Naive thymus-derived CD4-positive, alpha-beta T cell (primary cell): ENCODE measurements at regions of chr5 and their contacts with region 1.

Region 1: DNA sequence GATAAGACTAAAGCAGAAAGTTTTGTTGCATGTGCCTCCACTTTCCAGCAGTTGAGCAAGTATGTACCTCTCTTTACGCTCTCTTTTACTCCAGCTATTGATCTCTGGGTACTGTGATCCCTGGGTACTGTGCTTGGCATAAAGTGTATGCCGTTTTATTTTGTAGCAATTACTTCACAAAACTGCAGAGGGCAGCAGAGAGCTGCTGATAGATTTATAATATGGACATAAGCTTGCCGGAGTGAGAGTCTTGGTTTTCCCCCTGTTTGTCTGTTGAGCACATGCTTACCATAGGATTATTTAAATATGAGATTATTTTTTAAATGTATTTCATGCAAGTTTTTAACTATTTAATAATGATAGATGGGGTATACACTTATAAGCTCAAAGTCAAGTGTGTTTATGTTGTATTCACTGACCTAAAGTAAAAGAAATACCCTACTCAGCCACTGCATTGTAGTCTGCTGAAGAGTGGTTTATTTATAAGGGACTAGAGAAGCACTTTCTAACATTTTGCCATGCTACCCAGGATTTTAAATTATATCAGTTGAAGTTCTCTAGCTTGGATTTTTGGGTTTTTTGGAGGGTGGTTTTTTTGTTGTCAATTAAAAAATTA is 13.0 kb downstream of the TTC1 start:
- DNase-seq: peak in 8 of 9 donors; percentile 12 to 76 (median 64)
- ATAC-seq: peak; percentile 97
- H3K4me3 ChIP-seq: no peak overlapping the region
- H3K4me3 Mint-ChIP-seq: peak overlapping the region in 1 of 10 donors; percentile 6
- H3K27ac ChIP-seq: no peak overlapping the region
- H3K27ac Mint-ChIP-seq: peak overlapping the region in 7 of 9 donors; percentile 15 to 93 (median 68)
- H3K4me1 ChIP-seq: peaks cover 3 to 15% of the 10 kb centered on the region in 2 donors
- H3K4me1 Mint-ChIP-seq: peaks cover 17 to 53% (median 37%) of the 10 kb centered on the region in 7 donors
- H3K27me3 ChIP-seq: no peaks in the 10 kb centered on the region
- H3K27me3 Mint-ChIP-seq: no peaks in the 10 kb centered on the region

Region 2: DNA sequence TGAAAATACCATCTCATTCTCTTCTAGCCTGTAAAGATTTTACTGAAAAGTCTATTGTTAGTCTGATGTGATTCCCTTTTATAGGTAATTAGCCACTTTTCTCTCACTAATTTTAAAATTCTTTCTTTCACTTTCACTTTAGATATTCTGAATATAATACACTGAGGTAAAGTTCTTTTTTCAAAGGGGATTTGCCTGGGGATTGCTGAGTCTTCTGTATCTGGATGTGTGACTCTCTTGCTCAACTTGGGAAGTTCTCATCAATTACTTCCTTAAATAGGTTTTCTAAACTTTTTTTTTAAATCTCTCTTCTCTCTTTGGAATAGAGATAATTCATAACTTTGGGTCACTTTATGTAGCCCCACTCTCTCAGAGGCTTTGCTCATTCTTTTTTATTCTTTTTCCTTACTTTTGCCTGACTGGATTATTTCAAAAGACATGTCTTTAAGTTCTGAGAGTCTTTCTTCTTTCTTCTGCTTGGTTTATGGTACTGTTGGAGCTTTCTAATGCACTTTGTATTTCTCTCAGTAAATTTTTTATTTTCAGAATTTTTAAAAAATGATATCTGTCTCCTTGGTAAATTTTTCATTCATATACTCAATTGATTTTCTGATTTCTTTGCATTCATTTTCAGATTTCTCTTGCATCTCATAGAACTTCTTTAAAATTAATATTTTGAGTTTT is 635.8 kb before region 1 on chr5:
- CTCF ChIA-PET with region 1: no interaction called
- POLR2A ChIA-PET with region 1: no interaction called
- intact Hi-C with region 1: no loop called
- DNase-seq: no peak
- ATAC-seq: no peak
- H3K4me3 ChIP-seq: no peak overlapping the region
- H3K4me3 Mint-ChIP-seq: no peak overlapping the region
- H3K27ac ChIP-seq: no peak overlapping the region
- H3K27ac Mint-ChIP-seq: no peak overlapping the region
- H3K4me1 ChIP-seq: no peaks in the 10 kb centered on the region
- H3K4me1 Mint-ChIP-seq: peaks cover 0 to 2% (median 0%) of the 10 kb centered on the region in 7 donors
- H3K27me3 ChIP-seq: no peaks in the 10 kb centered on the region
- H3K27me3 Mint-ChIP-seq: peaks cover 0 to 40% (median 4%) of the 10 kb centered on the region in 5 donors

Region 3: DNA sequence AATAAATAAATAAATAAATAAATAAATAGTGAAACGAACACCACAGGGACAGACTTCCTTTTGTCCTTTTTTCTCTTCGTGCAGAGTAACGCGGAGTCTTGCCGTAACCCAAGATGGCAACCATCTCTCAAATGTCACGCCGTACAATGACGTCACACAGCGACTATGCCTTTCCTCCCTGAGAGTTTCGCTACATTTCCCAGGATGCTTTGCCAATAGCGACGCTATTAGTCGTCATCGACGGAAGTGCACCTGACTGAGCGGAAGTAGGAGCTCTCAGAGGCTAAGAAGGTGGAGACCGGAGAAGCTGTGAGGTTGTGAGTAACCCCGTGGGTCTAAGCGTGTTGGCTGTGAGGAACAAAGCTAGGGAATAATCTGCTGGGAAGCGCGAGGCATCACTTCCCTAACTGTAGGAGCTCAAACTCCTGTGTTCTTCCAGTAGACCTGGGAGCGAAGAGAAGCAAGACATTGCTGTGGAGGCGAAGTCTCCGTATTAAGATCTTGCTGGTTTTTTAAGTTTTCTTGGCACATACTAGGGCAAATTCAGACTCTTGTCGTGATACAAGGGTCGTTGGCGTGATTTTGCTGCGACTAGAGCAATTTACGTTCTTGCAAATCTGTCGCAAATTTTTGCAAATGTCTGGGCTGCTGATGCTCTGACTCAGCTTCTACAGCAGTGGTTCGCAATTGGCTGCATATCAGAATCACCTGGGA is 12.9 kb before region 1 on chr5 and contains the start of gene TTC1:
- CTCF ChIA-PET with region 1: interaction called, 12 read pairs
- POLR2A ChIA-PET with region 1: interaction called, 4 read pairs
- intact Hi-C with region 1: loop called in 1 of 2 experiments (anchors 1 kb)
- DNase-seq: peak; percentile 71 to 96 (median 91)
- ATAC-seq: peak; percentile 99
- H3K4me3 ChIP-seq: peak within 1 kb of the TSS; percentile 84
- H3K4me3 Mint-ChIP-seq: peak within 1 kb of the TSS; percentile 93 to 99 (median 96)
- H3K27ac ChIP-seq: peak within 1 kb of the TSS; percentile 85
- H3K27ac Mint-ChIP-seq: peak within 1 kb of the TSS; percentile 91 to 99 (median 97)
- H3K4me1 ChIP-seq: peaks cover 9 to 13% of the 10 kb centered on the region in 2 donors
- H3K4me1 Mint-ChIP-seq: peaks cover 19 to 40% (median 31%) of the 10 kb centered on the region in 7 donors
- H3K27me3 ChIP-seq: no peaks in the 10 kb centered on the region
- H3K27me3 Mint-ChIP-seq: peaks cover 0 to 3% (median 0%) of the 10 kb centered on the region in 5 donors
- total RNA-seq, gene TTC1: 24.3 to 56.5 (median 41.7) TPM

Region 4: GRCh38 chr5:160158087-160158486 is 136.1 kb after region 1 on chr5:
- CTCF ChIA-PET with region 1: interaction called, 4 read pairs
- POLR2A ChIA-PET with region 1: no interaction called
- intact Hi-C with region 1: loop called in 1 of 2 experiments (anchors 1 kb)
- DNase-seq: no peak
- ATAC-seq: no peak
- H3K4me3 ChIP-seq: no peak overlapping the region
- H3K4me3 Mint-ChIP-seq: no peak overlapping the region
- H3K27ac ChIP-seq: no peak overlapping the region
- H3K27ac Mint-ChIP-seq: no peak overlapping the region
- H3K4me1 ChIP-seq: no peaks in the 10 kb centered on the region
- H3K4me1 Mint-ChIP-seq: no peaks in the 10 kb centered on the region
- H3K27me3 ChIP-seq: no peaks in the 10 kb centered on the region
- H3K27me3 Mint-ChIP-seq: peaks cover 0 to 6% (median 1%) of the 10 kb centered on the region in 5 donors

Region 5: DNA sequence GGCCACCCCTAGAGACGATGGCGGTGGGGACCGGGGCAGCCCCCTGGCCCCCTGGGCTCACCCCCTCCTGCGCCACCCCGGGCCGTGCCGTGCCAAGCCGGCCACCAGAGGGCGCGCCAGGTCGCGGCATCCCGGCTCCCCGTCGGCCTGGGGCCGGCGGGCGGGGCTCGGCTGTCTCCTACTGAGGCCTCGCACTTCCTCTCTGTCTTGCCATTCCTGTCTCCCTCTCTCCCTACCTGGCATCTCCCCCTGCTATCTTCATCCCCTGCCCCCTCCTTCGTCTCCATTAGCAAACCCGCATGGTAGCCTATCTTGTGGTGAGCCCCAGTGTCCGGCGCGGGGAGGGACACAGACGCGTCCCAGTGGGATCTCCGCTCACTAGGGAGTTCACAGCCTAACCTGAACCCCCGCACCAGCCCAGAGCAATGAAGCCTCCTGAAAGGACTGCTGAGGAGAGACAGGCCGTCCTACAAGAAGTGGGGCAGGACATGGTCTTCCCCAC is 177.5 kb after region 1 on chr5:
- CTCF ChIA-PET with region 1: interaction called, 5 read pairs
- POLR2A ChIA-PET with region 1: no interaction called
- intact Hi-C with region 1: loop called (anchors 1 kb)
- DNase-seq: peak; percentile 35 to 86 (median 66)
- ATAC-seq: peak; percentile 93
- H3K4me3 ChIP-seq: peak overlapping the region; percentile 52
- H3K4me3 Mint-ChIP-seq: peak overlapping the region; percentile 54 to 88 (median 78)
- H3K27ac ChIP-seq: no peak overlapping the region
- H3K27ac Mint-ChIP-seq: peak overlapping the region in 2 of 9 donors; percentile 53 to 74
- H3K4me1 ChIP-seq: peaks cover 0 to 3% of the 10 kb centered on the region in 2 donors
- H3K4me1 Mint-ChIP-seq: peaks cover 0 to 11% (median 3%) of the 10 kb centered on the region in 7 donors
- H3K27me3 ChIP-seq: no peaks in the 10 kb centered on the region
- H3K27me3 Mint-ChIP-seq: peaks cover 0 to 15% (median 10%) of the 10 kb centered on the region in 5 donors

Region 6: DNA sequence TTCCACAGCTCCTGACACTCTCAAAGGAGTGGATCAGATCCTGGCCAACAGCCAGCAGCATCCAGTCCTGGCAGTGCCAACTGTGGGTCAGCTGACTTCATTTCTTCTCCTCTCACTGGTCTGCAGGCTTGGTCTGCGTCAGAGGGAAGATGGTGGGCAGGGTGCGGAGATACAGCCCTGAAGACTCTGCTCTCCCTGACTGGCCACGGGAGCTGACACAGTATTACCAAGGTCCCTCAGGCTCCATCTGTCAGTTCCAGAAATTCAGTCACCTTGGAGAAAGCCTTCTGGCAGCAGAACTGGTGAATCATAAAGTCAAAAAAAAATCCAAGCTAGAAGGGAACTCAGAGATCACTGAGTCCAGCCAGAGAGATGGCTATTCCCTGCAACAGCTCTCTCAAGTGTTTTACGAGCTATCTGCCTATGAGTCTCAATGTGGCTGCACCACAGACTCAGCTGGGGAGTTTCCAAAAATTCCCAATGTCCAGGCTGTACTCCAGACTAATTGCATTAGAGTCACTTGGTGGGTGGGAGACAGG is 320.5 kb after region 1 on chr5:
- CTCF ChIA-PET with region 1: interaction called, 55 read pairs
- POLR2A ChIA-PET with region 1: no interaction called
- intact Hi-C with region 1: loop called in 1 of 2 experiments (anchors 1 kb)
- DNase-seq: no peak
- ATAC-seq: no peak
- H3K4me3 ChIP-seq: no peak overlapping the region
- H3K4me3 Mint-ChIP-seq: no peak overlapping the region
- H3K27ac ChIP-seq: no peak overlapping the region
- H3K27ac Mint-ChIP-seq: no peak overlapping the region
- H3K4me1 ChIP-seq: no peaks in the 10 kb centered on the region
- H3K4me1 Mint-ChIP-seq: peaks cover 0 to 4% (median 0%) of the 10 kb centered on the region in 7 donors
- H3K27me3 ChIP-seq: no peaks in the 10 kb centered on the region
- H3K27me3 Mint-ChIP-seq: peaks cover 0 to 4% (median 0%) of the 10 kb centered on the region in 5 donors

Region 7: DNA sequence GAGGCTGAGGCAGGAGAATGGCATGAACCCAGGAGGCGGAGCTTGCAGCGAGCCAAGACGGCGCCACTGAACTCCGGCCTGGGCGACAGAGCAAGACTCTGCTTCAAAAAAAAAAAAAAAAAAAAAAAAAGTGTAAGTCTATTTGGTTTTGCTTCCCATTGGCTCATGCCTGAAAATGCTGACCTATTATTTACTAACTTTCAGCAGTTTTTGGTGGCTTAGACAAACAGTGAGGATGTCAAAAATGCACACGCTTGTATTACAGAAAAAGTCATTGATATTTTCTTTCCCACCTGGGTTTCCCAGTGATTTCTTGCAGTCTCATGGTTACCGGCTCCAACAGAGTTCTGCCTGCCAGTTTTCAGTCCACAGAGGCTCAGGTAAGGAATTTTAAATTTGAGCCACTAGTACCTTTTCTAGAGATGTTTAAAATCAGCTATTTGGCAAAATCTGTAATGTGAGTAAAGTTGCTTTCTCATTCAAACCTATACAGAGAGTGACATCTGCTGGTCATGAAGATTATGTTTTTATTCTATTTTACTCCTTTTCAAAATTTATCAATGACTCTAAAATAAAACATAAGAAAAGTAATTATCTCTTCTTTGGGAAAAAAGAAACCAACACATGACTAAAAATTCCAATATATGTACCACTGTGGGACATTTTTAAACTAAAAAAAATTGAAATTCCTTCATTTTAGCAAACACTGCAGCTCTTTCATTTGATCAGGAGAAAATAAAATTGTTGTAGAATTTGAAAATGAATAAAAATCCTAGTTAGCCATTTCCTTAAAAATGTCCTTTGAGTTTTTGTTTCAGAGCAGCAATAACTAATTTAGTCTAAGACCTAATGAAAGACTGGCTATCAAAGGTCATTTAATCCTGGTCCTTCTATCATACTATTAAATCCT is 369.1 kb after region 1 on chr5:
- CTCF ChIA-PET with region 1: interaction called, 5 read pairs
- POLR2A ChIA-PET with region 1: no interaction called
- intact Hi-C with region 1: loop called (anchors 1 kb)
- DNase-seq: peak in 2 of 9 donors; percentile 17 to 29
- ATAC-seq: no peak
- H3K4me3 ChIP-seq: no peak overlapping the region
- H3K4me3 Mint-ChIP-seq: no peak overlapping the region
- H3K27ac ChIP-seq: no peak overlapping the region
- H3K27ac Mint-ChIP-seq: no peak overlapping the region
- H3K4me1 ChIP-seq: no peaks in the 10 kb centered on the region
- H3K4me1 Mint-ChIP-seq: no peaks in the 10 kb centered on the region
- H3K27me3 ChIP-seq: no peaks in the 10 kb centered on the region
- H3K27me3 Mint-ChIP-seq: peaks cover 0 to 5% (median 0%) of the 10 kb centered on the region in 5 donors

Region 8: DNA sequence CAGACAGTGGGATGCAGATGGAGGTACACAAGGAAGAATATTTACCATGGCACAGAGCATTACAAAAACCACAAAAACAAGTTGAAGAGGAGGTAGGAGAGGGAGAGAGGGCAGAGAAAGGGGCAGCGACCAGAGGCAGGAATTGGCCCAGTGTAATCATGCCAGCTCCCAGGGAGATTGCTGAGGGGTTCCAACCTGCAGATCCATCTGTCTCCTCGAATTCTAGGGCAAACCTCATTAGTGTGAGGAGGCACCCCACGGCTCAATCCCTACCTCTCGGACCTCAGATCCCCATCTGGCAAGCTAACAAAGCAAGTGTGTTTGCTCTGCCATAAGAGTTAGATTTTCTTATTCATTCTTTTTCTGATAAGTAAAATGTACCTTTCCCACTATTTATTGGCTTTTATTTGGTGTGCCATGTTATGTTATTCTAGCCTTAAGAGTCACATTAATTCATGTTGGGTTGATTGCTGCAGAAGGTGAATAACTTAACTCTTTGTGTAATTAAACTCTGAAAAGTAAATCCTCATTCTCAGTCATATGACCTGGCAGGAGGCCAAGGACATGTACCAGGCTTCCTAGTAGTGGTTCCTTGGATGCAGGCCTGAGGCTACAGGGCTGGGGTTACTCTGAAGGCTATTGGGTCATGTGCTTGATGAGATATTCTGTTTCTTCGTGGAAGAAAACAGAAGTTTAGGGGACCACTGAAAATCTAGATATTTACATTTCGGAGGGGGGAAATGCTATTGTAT is 1145.3 kb after region 1 on chr5:
- CTCF ChIA-PET with region 1: no interaction called
- POLR2A ChIA-PET with region 1: no interaction called
- intact Hi-C with region 1: no loop called
- DNase-seq: no peak
- ATAC-seq: no peak
- H3K4me3 ChIP-seq: no peak overlapping the region
- H3K4me3 Mint-ChIP-seq: no peak overlapping the region
- H3K27ac ChIP-seq: no peak overlapping the region
- H3K27ac Mint-ChIP-seq: no peak overlapping the region
- H3K4me1 ChIP-seq: no peaks in the 10 kb centered on the region
- H3K4me1 Mint-ChIP-seq: no peaks in the 10 kb centered on the region
- H3K27me3 ChIP-seq: no peaks in the 10 kb centered on the region
- H3K27me3 Mint-ChIP-seq: no peaks in the 10 kb centered on the region